ENCODE measurements at regions of chr10 and their contacts with region 1.

Region 1: DNA sequence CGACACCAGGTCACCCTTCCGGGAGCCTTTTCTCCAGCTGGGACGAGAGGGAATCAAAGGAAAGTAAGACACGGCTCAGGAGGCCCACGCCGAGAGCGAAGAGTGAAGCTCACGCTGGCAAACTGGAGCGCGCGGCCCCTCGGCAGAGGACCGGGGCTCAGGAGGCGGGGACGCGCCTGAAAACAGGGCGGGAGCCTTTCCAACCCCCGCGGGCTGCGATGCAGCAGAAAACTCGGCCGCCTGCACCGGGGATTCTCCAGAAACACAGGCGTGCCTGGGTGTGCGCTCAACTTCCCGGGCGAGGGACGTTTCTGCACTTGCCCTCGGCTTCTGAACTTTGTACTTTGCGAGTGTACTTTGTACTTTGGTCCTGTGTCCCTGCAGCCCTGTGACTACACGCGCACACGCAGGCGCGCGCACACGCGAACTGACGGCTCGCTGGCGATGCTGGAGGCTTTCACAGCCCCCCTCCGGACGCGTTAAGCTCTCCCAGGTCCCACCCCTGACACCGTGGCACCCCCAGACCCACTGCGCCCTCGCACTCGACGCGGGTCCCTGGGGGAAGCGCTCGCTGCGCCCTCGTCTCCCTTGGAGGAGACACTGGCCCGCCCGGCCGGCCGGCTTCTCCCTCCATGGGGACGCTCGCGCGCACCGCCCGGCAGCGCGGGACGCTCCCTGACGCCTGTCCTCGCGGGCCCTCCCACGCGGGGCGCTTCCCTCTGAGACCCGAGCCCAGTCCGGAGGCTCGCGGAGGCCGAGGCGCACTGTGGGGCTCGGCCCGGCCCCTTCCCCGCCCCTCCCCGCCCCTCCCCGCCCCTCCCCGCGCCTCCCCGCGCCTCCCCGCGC is 588 bp upstream of the PAOX start:
- DNase-seq: peak; percentile 70
- ATAC-seq: peak; percentile 76
- H3K4me3 Mint-ChIP-seq: peak overlapping the region; percentile 79
- H3K27ac Mint-ChIP-seq: peak overlapping the region; percentile 57
- H3K4me1 Mint-ChIP-seq: peaks cover 13% of the 10 kb centered on the region
- H3K27me3 Mint-ChIP-seq: peaks cover 22% of the 10 kb centered on the region

Region 2: GRCh38 chr10:133388973-133389818 is 10.7 kb after region 1 on chr10:
- CTCF ChIA-PET with region 1: no interaction called
- POLR2A ChIA-PET with region 1: interaction called, 18 read pairs
- DNase-seq: peak; percentile 75
- ATAC-seq: peak; percentile 62
- H3K4me3 Mint-ChIP-seq: peak overlapping the region; percentile 87
- H3K27ac Mint-ChIP-seq: peak overlapping the region; percentile 99
- H3K4me1 Mint-ChIP-seq: peaks cover 44% of the 10 kb centered on the region
- H3K27me3 Mint-ChIP-seq: no peaks in the 10 kb centered on the region

Region 3: GRCh38 chr10:133438711-133439273 is 60.3 kb after region 1 on chr10:
- CTCF ChIA-PET with region 1: no interaction called
- POLR2A ChIA-PET with region 1: no interaction called
- DNase-seq: peak; percentile 56
- ATAC-seq: peak; percentile 54
- H3K4me3 Mint-ChIP-seq: no peak overlapping the region
- H3K27ac Mint-ChIP-seq: no peak overlapping the region
- H3K4me1 Mint-ChIP-seq: peaks cover 25% of the 10 kb centered on the region
- H3K27me3 Mint-ChIP-seq: peaks cover 5% of the 10 kb centered on the region

Region 4: DNA sequence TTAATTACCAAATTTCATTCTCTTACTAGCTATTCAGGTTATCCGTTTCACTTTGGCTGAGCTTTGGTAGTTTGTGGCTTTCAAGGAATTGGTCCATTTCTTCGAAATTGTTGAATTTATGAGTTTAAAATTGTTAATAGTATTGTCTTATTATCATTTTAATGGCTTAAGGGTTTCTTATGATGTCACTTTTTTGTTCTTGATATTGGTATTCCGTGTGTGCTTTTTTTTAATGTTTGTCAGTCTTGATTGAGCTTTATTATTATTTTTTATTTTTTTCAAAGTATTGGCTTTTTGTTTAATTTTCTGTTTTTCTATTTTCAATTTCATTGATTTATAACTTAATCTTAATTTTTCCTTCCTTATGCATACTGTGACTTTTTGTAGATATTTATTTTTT is 222.2 kb after region 1 on chr10:
- CTCF ChIA-PET with region 1: no interaction called
- POLR2A ChIA-PET with region 1: no interaction called
- DNase-seq: no peak
- ATAC-seq: no peak
- H3K4me3 Mint-ChIP-seq: no peak overlapping the region
- H3K27ac Mint-ChIP-seq: no peak overlapping the region
- H3K4me1 Mint-ChIP-seq: no peaks in the 10 kb centered on the region
- H3K27me3 Mint-ChIP-seq: peaks cover 51% of the 10 kb centered on the region

Measured in activated CD8-positive, alpha-beta T cell treated with anti-CD3 and anti-CD28 coated beads, Interleukin-2, amount 10 ng/mL, durations not matched to agents 7 days and 5 days (primary cell).